ENCODE measurements at regions of chr1 and their contacts with region 1.

Region 1: DNA sequence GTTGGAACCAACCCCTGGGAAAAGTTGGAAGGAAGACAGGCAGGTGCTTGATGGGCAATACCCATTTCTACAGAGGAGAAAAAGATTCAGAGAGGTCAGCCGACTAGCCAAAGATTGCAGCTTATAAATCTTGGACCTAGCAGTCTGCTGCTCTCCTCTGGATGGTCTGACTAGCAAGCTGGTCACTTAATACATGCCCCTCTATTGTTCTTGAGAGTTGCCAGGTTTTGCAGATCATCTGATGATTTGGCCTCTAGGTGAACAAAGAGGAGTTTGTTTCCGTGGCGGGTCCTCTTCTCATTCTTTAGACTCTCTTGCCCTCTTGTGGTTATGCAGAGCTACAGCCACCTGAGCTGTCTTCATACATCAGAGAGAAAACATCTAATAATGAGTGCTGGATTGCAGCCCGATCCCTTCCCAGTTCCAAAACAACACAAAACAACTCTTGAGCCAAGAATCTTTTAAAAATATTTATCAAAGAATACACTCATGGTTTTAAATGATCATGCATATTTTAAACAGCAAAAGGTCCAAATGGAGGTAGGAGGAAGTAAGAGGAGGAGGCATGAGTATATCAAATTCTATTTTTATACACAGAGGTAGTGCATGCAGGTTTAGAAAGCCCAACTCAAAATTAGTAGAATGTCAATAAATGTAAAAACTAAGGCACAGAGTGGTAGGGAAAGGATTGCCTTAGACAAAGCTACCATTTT is 115.7 kb downstream of the SLC30A10 start:
- DNase-seq: peak; percentile 98
- ATAC-seq: peak; percentile 91
- H3K4me3 ChIP-seq: no peak overlapping the region
- H3K27ac ChIP-seq: no peak overlapping the region
- H3K4me1 ChIP-seq: peaks cover 15% of the 10 kb centered on the region
- H3K27me3 ChIP-seq: peaks cover 44% of the 10 kb centered on the region
- CTCF ChIP-seq: peak; percentile 100

Region 2: GRCh38 chr1:218330043-218330623 is 1482.5 kb before region 1 on chr1:
- CTCF ChIA-PET with region 1: interaction called, 5 read pairs
- POLR2A ChIA-PET with region 1: no interaction called
- intact Hi-C with region 1: loop called (anchors 1 kb)
- DNase-seq: peak; percentile 81
- ATAC-seq: peak; percentile 75
- H3K4me3 ChIP-seq: no peak overlapping the region
- H3K27ac ChIP-seq: no peak overlapping the region
- H3K4me1 ChIP-seq: peaks cover 10% of the 10 kb centered on the region; the same call in 1 of the 2 replicates
- H3K27me3 ChIP-seq: no peaks in the 10 kb centered on the region
- CTCF ChIP-seq: peak; percentile 99

Region 3: DNA sequence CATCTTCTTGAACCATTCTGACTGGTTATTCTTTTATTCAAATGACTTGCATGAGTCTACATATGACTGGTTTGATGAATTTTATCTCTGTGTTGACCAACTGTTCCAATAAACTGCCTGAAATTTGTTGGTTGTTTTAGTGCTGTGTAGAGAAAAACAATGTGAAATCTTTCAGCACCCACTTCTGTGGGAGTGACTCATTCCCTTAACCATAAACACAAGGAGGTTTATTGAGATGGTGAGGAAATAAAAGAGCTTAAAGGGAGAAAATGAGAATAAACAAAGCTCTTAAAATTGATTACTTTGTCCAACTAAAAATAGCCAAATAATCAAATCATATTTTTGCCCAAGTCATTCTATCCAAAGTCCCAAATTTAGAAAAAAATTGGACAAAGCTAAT is 1126.4 kb before region 1 on chr1:
- CTCF ChIA-PET with region 1: no interaction called
- POLR2A ChIA-PET with region 1: no interaction called
- intact Hi-C with region 1: loop called (anchors 10 kb)
- DNase-seq: peak; percentile 82
- ATAC-seq: peak; percentile 84
- H3K4me3 ChIP-seq: no peak overlapping the region
- H3K27ac ChIP-seq: no peak overlapping the region
- H3K4me1 ChIP-seq: peaks cover 7% of the 10 kb centered on the region; the same call in 1 of the 2 replicates
- H3K27me3 ChIP-seq: no peaks in the 10 kb centered on the region
- CTCF ChIP-seq: no peak

Region 4: GRCh38 chr1:219298571-219299148 is 514.0 kb before region 1 on chr1:
- CTCF ChIA-PET with region 1: no interaction called
- POLR2A ChIA-PET with region 1: no interaction called
- intact Hi-C with region 1: loop called (anchors 5 kb)
- DNase-seq: no peak
- ATAC-seq: no peak
- H3K4me3 ChIP-seq: no peak overlapping the region
- H3K27ac ChIP-seq: no peak overlapping the region
- H3K4me1 ChIP-seq: peaks cover 33% of the 10 kb centered on the region
- H3K27me3 ChIP-seq: no peaks in the 10 kb centered on the region
- CTCF ChIP-seq: no peak

Region 5: DNA sequence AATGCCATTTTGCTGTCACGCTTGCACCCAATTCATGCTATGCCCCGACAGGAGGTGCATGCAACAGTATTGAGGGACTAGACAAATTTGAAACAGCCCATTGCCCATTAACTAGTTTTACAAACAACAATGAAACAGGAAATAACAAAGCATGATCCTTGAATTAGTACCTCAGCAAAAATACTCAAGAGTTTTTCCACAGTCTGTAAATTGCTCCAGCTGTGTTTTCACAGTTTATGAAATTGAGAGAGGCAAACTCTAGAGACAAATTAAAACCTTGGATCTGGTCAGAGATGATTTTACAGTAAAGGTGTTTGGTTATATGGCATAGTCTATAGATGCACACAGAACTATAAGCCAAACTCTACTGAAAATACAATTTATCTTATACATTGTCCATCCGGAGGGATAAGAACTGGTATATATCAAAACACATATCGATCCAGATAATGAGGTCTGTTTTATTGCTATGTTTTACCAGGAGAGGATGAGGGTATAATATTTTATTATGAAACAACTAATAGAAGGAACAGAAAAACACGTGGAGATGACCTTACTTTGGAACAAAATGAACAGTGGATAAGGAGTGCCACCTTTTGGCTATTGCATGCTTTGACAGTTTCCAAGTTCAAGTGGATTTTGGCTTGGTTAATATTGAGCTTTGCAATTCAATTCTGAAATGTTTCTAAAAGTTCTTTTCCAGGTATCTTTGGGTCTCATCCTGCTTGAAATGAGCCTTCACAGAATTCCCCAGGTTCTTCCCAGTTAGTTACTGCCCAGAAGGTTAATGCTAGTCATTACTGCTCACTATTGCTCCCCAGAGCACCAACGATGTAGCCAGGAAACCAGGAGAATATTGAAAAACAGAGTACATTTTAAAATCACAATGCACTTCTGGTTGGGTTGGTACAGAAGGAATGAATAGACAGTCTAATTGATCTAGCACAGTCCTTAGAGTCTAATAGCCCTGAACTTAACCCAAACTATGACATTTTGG is 245.4 kb before region 1 on chr1:
- CTCF ChIA-PET with region 1: interaction called, 11 read pairs
- POLR2A ChIA-PET with region 1: no interaction called
- intact Hi-C with region 1: loop called (anchors 1 kb)
- DNase-seq: peak; percentile 87
- ATAC-seq: peak; percentile 69
- H3K4me3 ChIP-seq: no peak overlapping the region
- H3K27ac ChIP-seq: peak overlapping the region; percentile 34
- H3K4me1 ChIP-seq: peaks cover 29% of the 10 kb centered on the region
- H3K27me3 ChIP-seq: no peaks in the 10 kb centered on the region
- CTCF ChIP-seq: peak; percentile 99

Region 6: DNA sequence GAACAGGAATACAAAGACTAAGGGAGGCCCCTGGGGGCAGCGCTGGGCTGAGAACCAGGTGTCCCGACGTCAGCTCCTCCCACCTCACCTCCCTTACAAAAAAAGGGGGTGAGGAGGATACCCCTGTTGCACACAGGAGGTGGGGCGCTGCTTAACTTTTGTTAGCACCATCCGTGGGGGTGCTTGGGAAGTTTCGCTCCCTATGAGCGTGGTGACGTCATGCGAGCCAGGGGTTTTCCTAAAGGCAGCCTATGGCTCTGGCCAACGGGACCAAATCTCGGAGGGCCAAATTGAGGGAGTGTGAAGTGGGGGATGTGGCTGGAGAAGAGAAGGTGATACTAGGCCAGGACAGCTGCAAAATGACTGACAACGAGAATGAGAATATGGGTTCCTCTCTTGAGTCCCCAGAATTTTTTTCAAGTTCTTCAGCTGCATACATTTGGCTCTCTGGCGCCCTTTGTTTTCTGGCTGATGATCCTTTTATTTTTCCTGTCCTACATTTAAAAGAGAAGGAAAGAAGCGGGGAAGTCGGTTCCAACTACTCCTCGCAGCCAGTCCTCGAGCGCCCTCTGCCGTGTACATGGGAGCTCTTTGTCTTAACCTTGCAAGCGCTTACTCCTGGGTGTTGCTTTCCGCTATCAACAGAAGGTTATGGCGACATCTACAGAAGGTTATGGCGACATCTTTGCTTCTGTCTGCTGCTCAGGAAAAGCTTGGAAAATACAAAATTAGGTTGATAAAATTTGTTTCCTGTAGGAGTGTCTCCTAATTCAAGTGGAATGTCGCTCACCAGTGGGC is 151.8 kb before region 1 on chr1:
- CTCF ChIA-PET with region 1: interaction called, 13 read pairs
- POLR2A ChIA-PET with region 1: no interaction called
- intact Hi-C with region 1: loop called (anchors 1 kb)
- DNase-seq: peak; percentile 99
- ATAC-seq: peak; percentile 99
- H3K4me3 ChIP-seq: peak overlapping the region; percentile 16; the same call in 1 of the 2 replicates
- H3K27ac ChIP-seq: no peak overlapping the region
- H3K4me1 ChIP-seq: peaks cover 25% of the 10 kb centered on the region
- H3K27me3 ChIP-seq: no peaks in the 10 kb centered on the region
- CTCF ChIP-seq: peak; percentile 99